Heart left ventricle (tissue), 16 donors: ENCODE measurements at regions of chr9 and their contacts with region 1.

Region 1: GRCh38 chr9:103837940-103838339 is 256.2 kb upstream of the SMC2 start:
- DNase-seq: no peak
- ATAC-seq: no peak
- H3K4me3 ChIP-seq: no peak overlapping the region
- H3K27ac ChIP-seq: no peak overlapping the region
- H3K4me1 ChIP-seq: no peaks in the 10 kb centered on the region
- H3K27me3 ChIP-seq: no peaks in the 10 kb centered on the region
- CTCF ChIP-seq: no peak
- POLR2A ChIP-seq: no peak

Region 2: DNA sequence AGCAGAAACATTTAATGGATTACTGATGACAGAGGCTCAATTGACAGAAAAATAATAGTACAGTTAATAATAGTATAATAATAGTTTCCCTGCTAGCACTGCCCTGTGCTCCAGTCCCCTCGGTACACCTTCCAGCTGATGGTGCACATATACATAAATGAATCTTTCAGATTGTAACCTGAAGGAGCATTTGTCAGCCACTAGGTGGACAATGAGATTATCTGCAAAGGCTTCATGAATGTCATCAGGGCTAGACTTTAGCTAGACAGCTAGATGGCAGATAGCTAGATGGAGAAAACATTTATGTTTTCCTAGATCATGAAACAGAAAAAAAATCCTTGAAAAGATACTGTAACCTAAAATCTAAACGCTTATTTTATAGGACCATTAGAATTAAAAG is 48.3 kb before region 1 on chr9:
- intact Hi-C with region 1: loop called in 1 of 10 experiments (anchors 5 kb)
- DNase-seq: no peak
- ATAC-seq: no peak
- H3K4me3 ChIP-seq: no peak overlapping the region
- H3K27ac ChIP-seq: no peak overlapping the region
- H3K4me1 ChIP-seq: no peaks in the 10 kb centered on the region
- H3K27me3 ChIP-seq: no peaks in the 10 kb centered on the region
- CTCF ChIP-seq: peak in 4 of 12 donors; percentile 11 to 17 (median 16)
- POLR2A ChIP-seq: no peak

Region 3: DNA sequence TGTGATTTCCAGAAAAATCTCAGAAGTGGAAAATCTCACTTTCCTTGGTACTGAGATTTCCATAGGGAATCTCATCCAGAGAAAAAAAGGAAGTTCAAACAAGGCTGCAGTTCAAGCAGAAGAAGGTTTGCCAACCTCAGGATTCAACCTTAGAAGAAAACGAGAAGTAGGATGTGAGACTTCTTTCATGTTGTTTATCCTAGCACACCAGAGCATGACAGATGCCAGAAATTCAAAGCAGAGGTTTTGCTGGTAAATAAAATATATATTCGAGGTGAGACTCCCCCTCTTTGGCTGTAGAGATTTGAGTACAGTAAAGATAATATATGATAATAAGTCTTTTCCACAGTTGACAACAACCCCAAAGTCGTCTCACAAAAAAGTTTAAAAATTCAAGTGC is 139.2 kb after region 1 on chr9:
- intact Hi-C with region 1: no loop called
- DNase-seq: no peak
- ATAC-seq: no peak
- H3K4me3 ChIP-seq: no peak overlapping the region
- H3K27ac ChIP-seq: no peak overlapping the region
- H3K4me1 ChIP-seq: no peaks in the 10 kb centered on the region
- H3K27me3 ChIP-seq: no peaks in the 10 kb centered on the region
- CTCF ChIP-seq: no peak
- POLR2A ChIP-seq: no peak